CD4-positive, alpha-beta T cell (primary cell): ENCODE measurements at regions of chr13 and their contacts with region 1.

Region 1: DNA sequence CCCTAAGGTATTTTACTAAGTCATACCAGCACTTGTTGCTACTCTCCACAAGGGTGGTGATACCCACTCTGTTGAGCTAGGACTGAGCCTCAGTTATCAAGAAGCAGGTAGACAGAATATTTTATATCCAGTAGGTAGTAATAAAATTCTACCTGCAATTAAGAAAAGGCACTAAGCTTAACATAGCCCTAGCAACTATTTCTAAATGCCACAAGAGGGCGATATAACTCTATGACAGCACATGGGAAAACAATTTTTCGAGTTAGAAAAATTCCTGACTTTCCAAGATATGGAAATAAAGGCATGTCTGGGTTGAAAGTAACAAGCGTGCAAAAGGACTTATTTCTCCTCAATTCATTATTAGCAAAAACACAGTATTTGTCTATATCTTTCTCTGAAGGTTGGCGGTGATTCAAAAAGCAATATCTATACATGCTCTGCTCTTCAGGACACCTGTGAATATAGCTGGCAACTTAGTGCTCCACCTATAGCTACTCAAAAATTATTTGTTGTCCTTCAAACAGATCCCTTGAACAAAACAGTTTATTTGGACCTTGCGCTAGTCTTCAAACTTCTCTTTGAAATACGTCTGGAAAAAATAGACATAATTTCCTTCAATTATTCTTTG is 14.7 kb downstream of the CCDC169 start:
- DNase-seq: peak in 3 of 14 experiments; percentile 10 to 32 (median 29)
- ATAC-seq: no peak
- H3K4me3 ChIP-seq: no peak overlapping the region
- H3K4me3 Mint-ChIP-seq: no peak overlapping the region
- H3K27ac ChIP-seq: no peak overlapping the region
- H3K27ac Mint-ChIP-seq: no peak overlapping the region
- H3K4me1 ChIP-seq: no peaks in the 10 kb centered on the region
- H3K4me1 Mint-ChIP-seq: no peaks in the 10 kb centered on the region
- H3K27me3 ChIP-seq: no peaks in the 10 kb centered on the region
- H3K27me3 Mint-ChIP-seq: peaks cover 14% of the 10 kb centered on the region
- CTCF ChIP-seq: peak; percentile 77

Region 2: DNA sequence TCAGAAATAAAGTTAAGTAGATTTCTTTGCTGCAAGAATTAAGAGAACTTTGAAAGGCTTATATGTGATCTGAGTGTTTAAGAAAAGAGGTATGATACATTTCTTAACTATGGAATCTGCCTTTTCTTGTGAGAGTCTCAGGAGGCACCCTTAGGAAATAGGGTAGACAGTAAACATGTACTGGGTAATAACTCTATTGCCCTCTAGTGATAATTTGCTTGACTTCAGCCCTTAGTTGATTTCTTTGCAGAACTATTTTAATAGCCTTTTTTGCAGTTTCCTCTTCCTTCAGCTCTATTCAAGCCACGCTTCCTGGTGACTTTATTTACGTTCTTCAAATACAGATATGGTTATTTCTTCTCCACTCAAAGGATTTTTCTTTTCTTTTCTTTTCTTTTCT is 112.3 kb after region 1 on chr13:
- CTCF ChIA-PET with region 1: no interaction called
- POLR2A ChIA-PET with region 1: no interaction called
- intact Hi-C with region 1: loop called in 1 of 2 experiments (anchors 10 kb)
- DNase-seq: peak in 2 of 14 experiments; percentile 3 to 4
- ATAC-seq: no peak
- H3K4me3 ChIP-seq: no peak overlapping the region
- H3K4me3 Mint-ChIP-seq: no peak overlapping the region
- H3K27ac ChIP-seq: no peak overlapping the region
- H3K27ac Mint-ChIP-seq: no peak overlapping the region
- H3K4me1 ChIP-seq: no peaks in the 10 kb centered on the region
- H3K4me1 Mint-ChIP-seq: no peaks in the 10 kb centered on the region
- H3K27me3 ChIP-seq: no peaks in the 10 kb centered on the region
- H3K27me3 Mint-ChIP-seq: peaks cover 5% of the 10 kb centered on the region
- CTCF ChIP-seq: no peak

Region 3: DNA sequence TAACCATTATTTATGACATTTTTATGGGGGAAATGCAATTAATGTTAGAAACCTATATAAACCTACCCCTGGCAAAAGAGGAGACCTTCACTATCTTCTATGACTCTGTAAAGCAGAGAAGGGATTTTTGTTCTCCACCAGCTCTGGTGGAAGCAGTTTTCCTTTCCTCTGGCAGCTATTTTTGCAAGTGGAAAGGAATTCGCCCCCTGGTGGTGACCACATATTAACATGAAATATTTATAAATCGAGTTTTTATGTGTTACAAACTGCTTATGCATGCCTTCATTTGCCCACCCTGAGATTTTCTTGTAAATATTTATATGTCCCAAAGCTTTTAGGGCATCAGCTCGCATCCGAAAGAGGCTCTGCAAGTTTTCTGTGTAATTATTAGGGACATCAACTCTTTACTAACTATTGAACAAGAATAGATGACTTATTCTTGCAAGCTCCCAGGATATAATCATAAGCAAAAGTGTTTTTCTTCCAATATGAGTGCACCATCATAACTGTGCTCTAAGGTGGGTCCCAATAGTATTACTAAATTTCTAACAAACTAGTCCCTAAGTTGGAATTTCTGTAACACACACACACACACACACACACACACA is 453.3 kb after region 1 on chr13:
- CTCF ChIA-PET with region 1: interaction called, 3 read pairs
- POLR2A ChIA-PET with region 1: no interaction called
- intact Hi-C with region 1: loop called (anchors 2 kb)
- DNase-seq: peak in 9 of 14 experiments; percentile 2 to 58 (median 14)
- ATAC-seq: no peak
- H3K4me3 ChIP-seq: no peak overlapping the region
- H3K4me3 Mint-ChIP-seq: no peak overlapping the region
- H3K27ac ChIP-seq: no peak overlapping the region
- H3K27ac Mint-ChIP-seq: no peak overlapping the region
- H3K4me1 ChIP-seq: no peaks in the 10 kb centered on the region
- H3K4me1 Mint-ChIP-seq: no peaks in the 10 kb centered on the region
- H3K27me3 ChIP-seq: peaks cover 0 to 3% of the 10 kb centered on the region in 2 experiments
- H3K27me3 Mint-ChIP-seq: no peaks in the 10 kb centered on the region
- CTCF ChIP-seq: peak; percentile 66